H1 (cell line): ENCODE measurements at regions of chr3 and their contacts with region 1.

Region 1: DNA sequence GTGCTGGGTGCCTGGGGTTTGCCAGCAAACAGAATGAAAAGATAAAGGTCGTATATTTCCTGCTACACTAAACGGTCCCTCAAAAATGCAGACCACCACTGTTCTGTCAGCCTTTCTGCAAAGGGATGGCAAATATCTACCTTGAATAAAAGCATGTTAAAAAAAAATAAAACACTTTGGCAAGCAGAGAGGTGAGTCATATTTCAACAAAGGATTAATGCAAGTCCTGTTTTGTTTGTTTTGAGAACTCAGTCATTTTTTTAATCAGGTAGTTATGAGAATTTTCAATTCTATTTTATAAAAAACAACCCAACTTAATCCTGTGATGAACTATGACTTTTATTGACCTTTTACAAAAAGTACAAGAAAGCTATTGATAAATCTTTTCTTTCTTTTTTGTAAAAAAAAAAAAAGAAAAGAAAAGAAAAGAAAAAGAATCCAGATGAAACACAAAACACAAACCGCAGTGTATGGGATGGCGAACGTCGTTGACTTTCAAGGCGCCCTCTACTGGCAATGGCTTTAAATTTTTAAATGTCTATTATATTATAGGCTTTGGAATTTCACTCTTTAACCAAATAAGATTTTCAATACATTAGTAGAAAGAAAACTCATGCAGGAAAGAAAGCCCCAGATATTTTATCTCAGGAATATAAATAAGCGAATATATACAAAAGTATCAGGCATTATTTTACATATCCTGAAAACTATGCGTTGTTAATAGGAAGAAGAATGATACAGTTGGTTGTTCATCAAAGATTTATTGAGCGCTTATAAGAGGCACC is 87.8 kb downstream of the NCEH1 start:
- DNase-seq: no peak
- H3K4me3 ChIP-seq: no peak overlapping the region
- H3K27ac ChIP-seq: no peak overlapping the region
- H3K4me1 ChIP-seq: peaks cover 0 to 4% (median 2%) of the 10 kb centered on the region in 4 experiments; a peak in 2 of 7 replicates
- H3K27me3 ChIP-seq: no peaks in the 10 kb centered on the region
- CTCF ChIP-seq: peak; percentile 18 to 42 (median 28); a peak in 3 of 4 replicates
- EP300 ChIP-seq: no peak
- POLR2A ChIP-seq: no peak
- RAD21 ChIP-seq: peak; percentile 40 to 45

Region 2: DNA sequence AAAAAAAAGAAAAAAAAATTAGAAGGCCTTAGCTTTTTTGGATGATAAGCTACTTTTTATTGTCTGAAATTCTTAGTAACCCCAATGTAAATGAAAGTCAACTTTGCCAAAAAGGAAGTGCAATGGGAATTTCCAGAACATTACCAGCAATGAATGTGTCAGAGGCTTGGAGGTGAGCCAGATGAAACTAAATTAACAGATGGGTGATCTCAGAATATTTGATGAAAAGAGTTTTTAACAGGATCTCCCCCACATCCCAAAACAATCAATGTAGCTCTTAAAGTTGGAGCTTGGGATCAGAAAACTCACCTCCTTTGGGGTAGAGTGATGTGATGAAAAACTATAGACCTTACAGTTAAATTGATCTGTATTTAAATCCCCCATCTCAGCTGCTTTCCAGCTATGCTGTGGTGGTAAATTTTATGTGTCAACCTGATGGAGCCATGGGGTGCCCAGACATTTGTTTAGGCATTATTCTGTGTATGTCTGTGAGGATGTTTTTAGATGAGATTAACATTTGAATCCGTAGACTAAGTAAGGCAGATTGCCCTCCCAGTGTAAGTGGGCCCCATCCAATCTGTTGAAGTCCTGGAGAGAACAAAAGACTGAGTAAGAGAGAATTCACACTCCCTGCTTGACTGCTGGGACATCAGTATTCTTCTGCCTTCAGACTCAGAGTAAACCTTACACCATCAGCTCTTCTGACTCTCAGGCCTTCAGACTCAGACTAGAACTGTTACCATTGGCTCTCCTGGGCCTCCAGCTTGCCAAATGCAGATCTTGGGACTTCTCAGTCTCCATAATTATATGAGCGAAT is 15.6 kb before region 1 on chr3:
- CTCF ChIA-PET with region 1: interaction called, 18 read pairs
- POLR2A ChIA-PET with region 1: no interaction called
- DNase-seq: peak in 1 of 2 experiments; percentile 29
- H3K4me3 ChIP-seq: peak overlapping the region in 1 of 4 experiments; percentile 10; a peak in 1 of 8 replicates
- H3K27ac ChIP-seq: no peak overlapping the region; the same call in 1 of the 2 replicates
- H3K4me1 ChIP-seq: peaks cover 0 to 8% (median 2%) of the 10 kb centered on the region in 4 experiments; a peak in 2 of 7 replicates
- H3K27me3 ChIP-seq: no peaks in the 10 kb centered on the region
- CTCF ChIP-seq: no peak
- EP300 ChIP-seq: no peak
- POLR2A ChIP-seq: no peak
- RAD21 ChIP-seq: no peak

Region 3: DNA sequence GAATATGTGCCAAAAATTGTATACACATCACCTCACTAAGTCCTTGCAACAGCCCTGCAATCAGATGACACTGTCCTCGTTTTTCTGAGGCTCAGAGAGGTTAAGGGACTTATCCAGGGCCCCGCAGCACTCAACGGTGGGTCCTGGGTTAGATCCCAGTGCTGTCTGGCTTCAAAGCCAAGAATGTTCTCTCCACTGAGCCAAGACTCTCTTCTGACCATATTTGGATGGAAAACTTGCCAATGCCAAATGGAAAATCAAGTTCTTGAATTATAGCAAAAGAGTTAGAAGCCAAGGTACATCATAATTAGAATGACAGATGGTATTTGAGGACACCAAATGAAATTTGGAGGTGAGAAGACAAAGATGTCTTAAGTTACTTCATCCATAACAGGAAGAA is 11.8 kb after region 1 on chr3:
- CTCF ChIA-PET with region 1: interaction called, 28 read pairs
- POLR2A ChIA-PET with region 1: no interaction called
- DNase-seq: no peak
- H3K4me3 ChIP-seq: no peak overlapping the region
- H3K27ac ChIP-seq: no peak overlapping the region
- H3K4me1 ChIP-seq: no peaks in the 10 kb centered on the region
- H3K27me3 ChIP-seq: peaks cover 0 to 1% (median 0%) of the 10 kb centered on the region in 4 experiments; a peak in 1 of 7 replicates
- CTCF ChIP-seq: no peak
- EP300 ChIP-seq: no peak
- POLR2A ChIP-seq: no peak
- RAD21 ChIP-seq: no peak

Region 4: DNA sequence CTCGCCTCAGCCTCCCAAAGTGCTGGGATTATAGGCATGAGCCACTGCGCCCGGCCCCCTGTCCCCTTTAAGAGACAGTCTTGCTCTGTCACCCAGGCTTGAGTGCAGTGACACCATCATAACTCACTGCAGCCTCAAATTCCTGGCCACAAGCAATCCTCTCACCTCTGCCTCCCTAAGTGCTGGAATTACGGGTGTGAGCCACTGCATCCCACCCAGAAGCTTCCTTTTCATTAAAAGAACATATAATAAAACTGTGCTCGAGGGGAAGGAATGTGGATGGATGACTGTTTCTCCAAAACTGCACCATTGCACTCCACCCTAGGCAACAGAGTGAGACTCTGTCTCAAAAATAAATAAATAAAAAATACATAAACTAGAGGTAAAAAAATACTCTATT is 17.6 kb after region 1 on chr3:
- CTCF ChIA-PET with region 1: interaction called, 17 read pairs
- POLR2A ChIA-PET with region 1: no interaction called
- DNase-seq: no peak
- H3K4me3 ChIP-seq: no peak overlapping the region
- H3K27ac ChIP-seq: no peak overlapping the region
- H3K4me1 ChIP-seq: no peaks in the 10 kb centered on the region
- H3K27me3 ChIP-seq: peaks cover 0 to 1% (median 0%) of the 10 kb centered on the region in 4 experiments; a peak in 1 of 7 replicates
- CTCF ChIP-seq: no peak
- EP300 ChIP-seq: no peak
- POLR2A ChIP-seq: no peak
- RAD21 ChIP-seq: no peak